ENCODE measurements at regions of chr9 and their contacts with region 1.

Region 1: DNA sequence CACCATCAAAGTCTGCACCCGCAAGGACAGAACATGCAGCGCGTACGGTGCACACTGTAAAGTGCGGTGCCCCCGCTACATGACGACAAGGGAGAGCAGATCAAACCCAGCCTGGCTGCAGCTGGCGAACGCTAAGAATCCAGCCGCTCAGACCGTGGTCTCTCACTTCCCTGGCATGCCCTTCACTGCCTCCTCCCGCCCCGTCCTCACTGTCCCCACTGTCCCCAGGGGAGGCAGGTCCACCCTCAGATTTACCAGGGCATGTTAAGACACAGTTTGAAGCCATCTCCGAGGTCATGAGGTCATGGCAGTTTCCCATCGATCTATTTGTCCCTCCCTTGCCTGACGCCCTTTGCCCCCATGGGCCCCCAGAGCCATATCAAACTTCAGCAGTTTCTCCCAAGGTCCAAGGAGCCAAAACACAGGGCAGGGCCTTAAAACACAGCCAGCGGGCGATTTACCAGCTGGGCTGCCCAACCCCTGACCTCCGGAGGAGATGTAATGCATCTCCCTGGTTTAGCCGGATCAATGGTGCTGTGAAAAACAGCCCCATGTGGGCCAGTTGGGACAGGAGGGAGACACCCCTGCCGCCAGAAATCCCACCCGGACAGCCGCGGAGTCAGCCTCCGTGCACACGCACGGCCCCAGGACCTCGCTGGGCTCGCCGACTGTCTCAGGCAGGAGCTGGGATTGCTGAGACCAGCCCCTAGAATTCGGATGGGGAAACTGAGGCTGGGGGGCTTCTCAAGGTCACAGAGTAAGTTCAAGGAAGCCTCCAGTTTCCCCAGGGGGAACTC is 52.3 kb upstream of the FUBP3 start:
- DNase-seq: no peak

Region 2: DNA sequence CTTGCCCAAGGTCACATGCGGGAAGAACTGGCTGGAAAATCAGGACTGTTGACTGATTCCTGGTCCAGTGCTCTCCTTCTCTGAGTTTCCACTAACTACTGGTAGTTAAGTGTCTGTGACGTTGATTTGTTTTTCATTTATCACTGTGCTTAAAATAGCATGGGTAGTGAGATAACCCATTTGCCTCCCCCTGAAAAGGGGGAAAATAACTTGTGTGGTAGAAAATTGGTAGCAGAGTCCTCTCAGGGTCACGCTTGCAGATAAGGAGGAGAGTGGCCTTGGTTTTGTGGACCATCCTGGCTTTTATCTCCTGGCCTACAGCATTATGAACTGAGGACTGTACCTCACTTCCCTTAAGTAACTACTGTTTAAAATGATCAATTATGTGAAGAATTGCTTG is 63.3 kb after region 1 on chr9:
- intact Hi-C with region 1: no loop called
- DNase-seq: no peak

Region 3: DNA sequence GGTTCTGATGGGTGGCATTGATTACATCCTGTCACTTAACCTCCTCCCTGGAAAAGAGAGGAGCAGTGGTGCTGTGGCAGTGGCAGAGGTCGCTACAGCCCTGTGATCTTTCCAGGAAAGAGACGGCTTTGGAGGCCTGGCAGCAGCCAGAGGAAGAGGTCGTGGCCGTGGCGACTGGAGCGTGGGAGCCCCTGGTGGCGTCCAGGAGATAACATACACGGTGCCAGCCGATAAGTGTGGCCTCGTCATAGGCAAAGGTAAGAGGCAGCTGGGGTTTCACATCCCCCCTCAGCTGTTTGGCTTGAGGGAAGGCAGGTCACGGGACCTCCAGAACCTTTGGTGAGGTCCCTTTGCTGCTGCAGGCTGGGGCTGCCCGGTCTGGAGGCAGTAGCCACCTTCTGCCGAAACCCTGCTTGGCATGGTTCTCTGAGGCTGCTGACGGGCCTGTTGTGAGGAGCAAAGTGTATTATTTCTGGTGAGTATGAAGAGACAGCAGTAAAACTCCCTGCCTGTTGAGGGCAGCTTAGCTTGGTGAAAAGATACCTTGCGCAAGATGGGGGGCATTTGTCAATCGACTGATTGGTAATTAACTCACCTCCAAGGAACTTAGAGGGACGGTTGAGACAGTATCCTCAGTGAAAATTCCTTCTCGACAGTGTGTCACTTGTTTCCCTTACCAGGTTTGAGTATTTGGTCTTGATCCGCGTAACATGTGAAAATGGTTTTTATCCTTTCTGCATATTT is 99.4 kb after region 1 on chr9:
- intact Hi-C with region 1: no loop called
- DNase-seq: peak; percentile 68

Region 4: DNA sequence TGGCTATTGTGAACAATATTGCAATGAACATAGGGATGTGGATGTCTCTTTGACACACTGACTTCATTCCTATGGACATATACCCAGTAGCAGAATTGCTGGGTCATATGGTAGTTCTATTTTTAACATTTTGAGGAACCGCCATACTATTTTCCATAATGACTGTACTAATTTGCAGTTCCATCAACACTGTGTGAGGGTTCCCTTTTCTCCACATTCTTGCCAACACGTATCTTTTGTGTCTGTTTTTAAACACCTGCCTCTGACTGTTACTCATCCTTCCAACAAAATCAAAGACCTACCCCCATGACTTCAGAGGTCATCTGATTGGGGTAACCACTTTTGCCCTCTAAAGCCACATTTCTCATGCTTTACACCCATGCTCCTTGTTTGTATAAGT is 1419.1 kb after region 1 on chr9:
- intact Hi-C with region 1: loop called in 1 of 2 experiments (anchors 5 kb)
- DNase-seq: no peak